ENCODE measurements at regions of chr2 and their contacts with region 1.

Region 1: GRCh38 chr2:39124000-39124745 is 3.3 kb upstream of the SOS1 start:
- DNase-seq: peak; percentile 96
- H3K4me3 Mint-ChIP-seq: peak overlapping the region; percentile 88
- H3K27ac Mint-ChIP-seq: peak overlapping the region; percentile 97
- H3K4me1 Mint-ChIP-seq: peaks cover 39% of the 10 kb centered on the region
- H3K27me3 Mint-ChIP-seq: no peaks in the 10 kb centered on the region

Region 2: GRCh38 chr2:38377050-38377828 is 746.9 kb before region 1 on chr2 and contains the start of gene ATL2:
- CTCF ChIA-PET with region 1: no interaction called
- intact Hi-C with region 1: loop called (anchors 1 kb)
- DNase-seq: peak; percentile 96
- H3K4me3 Mint-ChIP-seq: peak within 1 kb of the TSS; percentile 90
- H3K27ac Mint-ChIP-seq: peak within 1 kb of the TSS; percentile 78
- H3K4me1 Mint-ChIP-seq: peaks cover 55% of the 10 kb centered on the region
- H3K27me3 Mint-ChIP-seq: no peaks in the 10 kb centered on the region
- total RNA-seq, gene ATL2: 54.6 to 55.9 TPM

Region 3: DNA sequence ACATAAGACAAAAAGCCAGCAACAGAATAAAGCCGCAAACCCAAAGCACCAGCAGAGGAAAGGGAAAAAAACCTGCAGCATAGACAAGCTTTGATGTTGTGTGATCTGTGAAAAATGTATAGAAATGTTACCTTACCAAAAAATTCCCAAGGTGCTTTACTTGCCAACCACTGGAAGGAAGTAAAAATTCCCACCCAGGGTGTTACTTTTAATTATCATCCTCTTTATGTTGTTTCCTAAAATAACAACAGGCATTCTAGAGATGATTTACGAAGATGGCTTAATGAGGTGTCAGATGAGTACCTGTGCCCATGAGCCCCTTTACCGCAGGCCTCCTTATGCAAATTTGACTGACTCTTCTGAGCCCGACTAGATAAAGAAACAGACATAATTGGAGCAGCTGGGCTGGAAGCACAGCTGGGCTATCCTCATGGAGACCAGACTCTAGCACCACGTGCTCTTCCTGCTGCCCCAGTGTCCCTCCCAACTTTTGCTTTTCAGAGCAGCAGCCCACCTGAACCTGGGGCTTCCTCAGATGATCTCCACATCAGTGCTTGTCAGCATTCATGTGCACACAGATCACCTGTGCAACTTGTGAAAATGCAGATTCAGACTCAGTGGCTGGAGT is 414.5 kb before region 1 on chr2:
- CTCF ChIA-PET with region 1: no interaction called
- intact Hi-C with region 1: loop called (anchors 1 kb)
- DNase-seq: peak; percentile 80
- H3K4me3 Mint-ChIP-seq: peak overlapping the region; percentile 49
- H3K27ac Mint-ChIP-seq: peak overlapping the region; percentile 95
- H3K4me1 Mint-ChIP-seq: peaks cover 68% of the 10 kb centered on the region
- H3K27me3 Mint-ChIP-seq: no peaks in the 10 kb centered on the region

Region 4: GRCh38 chr2:39008665-39009064 is 115.5 kb before region 1 on chr2:
- CTCF ChIA-PET with region 1: no interaction called
- intact Hi-C with region 1: loop called (anchors 1 kb)
- DNase-seq: peak; percentile 45
- H3K4me3 Mint-ChIP-seq: no peak overlapping the region
- H3K27ac Mint-ChIP-seq: no peak overlapping the region
- H3K4me1 Mint-ChIP-seq: peaks cover 10% of the 10 kb centered on the region
- H3K27me3 Mint-ChIP-seq: no peaks in the 10 kb centered on the region

Region 5: DNA sequence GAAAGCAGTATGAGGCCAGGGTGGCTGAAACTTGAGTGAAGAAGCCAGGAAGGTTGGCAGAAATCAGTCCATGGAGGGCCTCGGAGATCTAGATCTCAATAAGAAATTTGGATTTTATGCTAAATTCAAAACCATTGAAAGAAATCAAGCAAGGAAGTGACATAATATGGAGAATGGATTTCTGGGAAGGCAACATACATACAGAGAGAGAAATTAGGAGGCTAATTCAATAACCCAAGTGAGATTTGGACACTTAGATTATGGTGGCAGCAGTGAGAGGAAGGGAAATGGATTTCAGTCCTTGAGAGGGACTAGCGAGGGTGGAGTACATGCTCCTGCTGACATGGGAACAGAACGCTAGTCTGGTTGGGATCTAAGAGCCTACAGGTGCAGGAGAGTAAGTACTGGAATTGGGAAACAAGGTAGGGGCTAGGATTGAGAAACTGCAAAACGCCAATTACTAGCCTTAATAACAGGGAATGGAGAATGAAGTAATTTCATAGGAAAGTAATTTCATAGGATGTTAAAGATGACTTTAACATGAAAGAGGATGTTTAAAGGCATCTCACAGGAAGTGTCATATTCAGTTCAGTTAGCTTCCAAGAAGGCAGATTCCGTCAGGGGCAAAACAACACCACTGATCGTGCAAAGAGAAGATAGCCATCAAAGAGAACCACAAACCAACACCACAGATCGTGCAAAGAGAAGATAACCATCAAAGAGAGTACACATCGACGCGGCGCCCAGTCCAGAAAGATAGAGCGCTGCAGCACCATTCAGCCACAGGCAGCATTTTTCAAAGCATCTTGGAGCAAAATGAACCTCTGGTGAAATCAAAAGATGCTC is 92.4 kb after region 1 on chr2:
- CTCF ChIA-PET with region 1: interaction called, 6 read pairs
- intact Hi-C with region 1: loop called (anchors 1 kb)
- DNase-seq: peak; percentile 64
- H3K4me3 Mint-ChIP-seq: peak overlapping the region; percentile 57
- H3K27ac Mint-ChIP-seq: peak overlapping the region; percentile 87
- H3K4me1 Mint-ChIP-seq: peaks cover 36% of the 10 kb centered on the region
- H3K27me3 Mint-ChIP-seq: no peaks in the 10 kb centered on the region

Region 6: DNA sequence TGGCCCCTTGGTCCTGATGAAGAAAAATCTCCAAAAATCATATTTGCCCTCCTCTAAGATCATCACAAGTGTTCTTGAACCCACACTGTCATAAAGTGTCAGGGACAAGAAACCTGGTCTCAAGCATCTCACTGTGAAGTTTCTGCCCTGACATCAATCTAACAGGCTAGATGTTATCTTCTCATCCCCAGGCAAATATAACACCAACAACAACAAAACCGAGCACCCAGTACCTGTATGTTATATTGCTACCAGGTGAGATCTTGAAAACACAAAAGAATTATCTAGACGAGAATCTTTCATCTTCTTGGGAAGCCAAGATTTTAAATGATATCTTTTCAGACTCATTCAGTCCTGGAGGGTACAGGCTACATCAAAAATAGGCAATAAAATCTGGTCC is 321.7 kb after region 1 on chr2:
- CTCF ChIA-PET with region 1: no interaction called
- intact Hi-C with region 1: no loop called
- DNase-seq: no peak
- H3K4me3 Mint-ChIP-seq: no peak overlapping the region
- H3K27ac Mint-ChIP-seq: no peak overlapping the region
- H3K4me1 Mint-ChIP-seq: peaks cover 1% of the 10 kb centered on the region
- H3K27me3 Mint-ChIP-seq: no peaks in the 10 kb centered on the region

Region 7: DNA sequence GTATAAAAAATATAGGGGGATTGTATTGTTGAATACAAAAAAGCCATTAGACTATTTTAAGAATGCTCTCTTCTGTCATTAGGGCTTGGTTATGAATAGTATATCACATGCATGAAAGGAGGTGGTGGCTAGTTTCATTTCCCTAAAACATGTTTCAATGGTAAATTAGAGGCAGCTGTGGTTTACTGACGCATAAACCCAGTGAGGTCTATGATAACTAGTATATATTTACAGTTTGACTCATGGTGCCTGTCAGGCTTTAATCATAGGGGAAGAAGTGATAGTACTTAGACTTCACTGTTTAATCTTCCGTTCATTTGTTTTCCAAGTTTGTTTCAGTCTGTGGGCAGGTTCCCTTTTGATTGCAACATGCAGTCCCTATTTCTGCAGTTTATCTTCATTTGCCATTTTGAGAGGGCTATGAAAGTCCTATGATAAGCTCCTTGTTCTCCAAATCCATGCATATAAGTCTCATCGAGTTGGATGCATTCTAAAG is 368.0 kb after region 1 on chr2:
- CTCF ChIA-PET with region 1: no interaction called
- intact Hi-C with region 1: loop called (anchors 1 kb)
- DNase-seq: peak; percentile 67
- H3K4me3 Mint-ChIP-seq: peak overlapping the region; percentile 37
- H3K27ac Mint-ChIP-seq: peak overlapping the region; percentile 53
- H3K4me1 Mint-ChIP-seq: peaks cover 30% of the 10 kb centered on the region
- H3K27me3 Mint-ChIP-seq: peaks cover 6% of the 10 kb centered on the region